T-cell (primary cell): ENCODE measurements at regions of chr14 and their contacts with region 1.

Region 1: DNA sequence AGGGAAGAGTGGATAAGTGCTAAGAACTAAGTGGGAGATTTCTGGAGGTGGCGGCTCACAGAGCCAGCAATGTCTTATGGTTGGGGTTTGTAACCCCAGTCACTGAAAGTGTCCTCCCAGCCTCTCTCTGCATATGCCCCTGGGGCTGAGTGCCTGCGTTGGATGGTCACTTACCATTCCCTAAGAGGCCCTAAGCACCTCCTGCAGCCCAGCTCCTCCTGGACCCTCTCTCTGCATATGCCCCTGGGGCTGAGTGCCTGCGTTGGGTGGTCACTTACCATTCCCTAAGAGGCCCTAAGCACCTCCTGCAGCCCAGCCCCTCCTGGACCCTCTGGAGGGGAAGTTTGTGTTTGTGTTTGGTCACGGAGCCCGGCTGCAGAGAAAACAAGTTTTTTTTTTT is 425.8 kb downstream of the TMEM121 start:
- DNase-seq: no peak
- ATAC-seq: no peak
- H3K4me3 ChIP-seq: no peak overlapping the region
- H3K4me3 Mint-ChIP-seq: no peak overlapping the region
- H3K27ac ChIP-seq: no peak overlapping the region
- H3K27ac Mint-ChIP-seq: no peak overlapping the region
- H3K4me1 ChIP-seq: peaks cover 0 to 2% of the 10 kb centered on the region in 2 experiments
- H3K4me1 Mint-ChIP-seq: peaks cover 4 to 13% (median 10%) of the 10 kb centered on the region in 3 donors
- H3K27me3 ChIP-seq: peaks cover 0 to 17% of the 10 kb centered on the region in 2 experiments
- H3K27me3 Mint-ChIP-seq: peaks cover 15 to 16% of the 10 kb centered on the region in 2 donors

Region 2: DNA sequence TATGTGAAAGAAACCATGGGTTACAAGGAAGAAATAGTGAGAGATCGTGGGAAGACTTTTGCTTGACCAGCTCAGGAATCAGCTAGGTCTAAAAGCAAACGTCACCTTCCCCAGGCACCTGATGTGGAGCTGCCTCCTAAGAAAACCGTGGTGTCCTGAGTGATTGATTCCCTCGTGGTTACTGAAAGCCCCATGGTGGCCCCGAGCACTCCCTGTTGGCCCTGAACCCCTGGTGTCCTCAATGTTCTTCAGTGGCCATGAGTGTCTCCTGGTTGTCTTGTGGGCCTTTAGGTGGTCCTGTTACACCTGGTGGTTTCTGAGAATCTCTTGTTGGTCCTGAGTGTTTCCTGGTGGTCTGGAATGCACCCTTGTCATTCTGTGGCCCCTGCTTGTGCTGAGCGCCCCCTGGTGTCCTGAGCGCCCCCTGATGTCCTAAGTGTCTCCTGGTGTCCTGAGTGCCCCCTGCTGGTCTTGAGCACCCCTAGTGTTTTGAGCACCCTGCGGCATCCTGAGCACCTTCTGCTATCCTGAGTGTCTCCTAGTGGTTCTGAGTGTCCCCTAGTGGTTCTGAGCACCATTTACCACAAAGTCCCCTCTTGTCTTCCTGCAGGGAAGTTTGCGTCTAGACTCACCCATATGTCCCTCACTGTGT is 92.9 kb after region 1 on chr14:
- CTCF ChIA-PET with region 1: interaction called in 1 of 2 experiments, 10 read pairs
- POLR2A ChIA-PET with region 1: no interaction called
- DNase-seq: peak; percentile 55 to 87 (median 74)
- ATAC-seq: peak; percentile 87 to 99 (median 97)
- H3K4me3 ChIP-seq: no peak overlapping the region
- H3K4me3 Mint-ChIP-seq: no peak overlapping the region
- H3K27ac ChIP-seq: no peak overlapping the region
- H3K27ac Mint-ChIP-seq: no peak overlapping the region
- H3K4me1 ChIP-seq: no peaks in the 10 kb centered on the region
- H3K4me1 Mint-ChIP-seq: peaks cover 0 to 4% (median 3%) of the 10 kb centered on the region in 3 donors
- H3K27me3 ChIP-seq: peaks cover 0 to under 1% of the 10 kb centered on the region in 2 experiments
- H3K27me3 Mint-ChIP-seq: peaks cover 4 to 14% of the 10 kb centered on the region in 2 donors